BJ (cell line): ENCODE measurements at regions of chr1 and their contacts with region 1.

Region 1: GRCh38 chr1:199684686-199685273 is 342.7 kb upstream of the NR5A2 start:
- DNase-seq: peak; percentile 15
- H3K4me3 ChIP-seq: no peak overlapping the region
- H3K27me3 ChIP-seq: 0 out of 2 replicates have a peak, but pooled peaks cover 1% of the 10 kb centered on the region
- CTCF ChIP-seq: peak; percentile 78

Region 2: DNA sequence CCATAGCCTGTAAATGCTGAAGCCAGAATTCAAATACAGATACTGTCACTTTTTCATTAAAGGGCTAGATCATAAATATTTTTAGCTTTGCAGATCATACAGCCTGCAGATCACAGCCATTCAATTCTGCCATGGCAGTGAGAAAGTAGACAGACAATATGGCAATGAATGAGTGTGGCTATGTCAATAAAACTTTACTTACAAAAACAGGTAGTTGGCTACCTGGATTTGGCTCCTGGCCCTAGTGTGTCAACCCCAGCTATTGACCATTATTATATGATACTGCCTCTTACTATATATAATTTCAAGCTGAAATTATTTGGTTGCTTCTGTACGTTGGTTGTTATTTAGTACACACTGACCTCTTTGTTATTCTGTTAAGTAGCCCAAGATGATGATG is 76.1 kb after region 1 on chr1:
- CTCF ChIA-PET with region 1: no interaction called
- POLR2A ChIA-PET with region 1: no interaction called
- DNase-seq: no peak
- H3K4me3 ChIP-seq: no peak overlapping the region
- H3K27me3 ChIP-seq: peaks cover 4% of the 10 kb centered on the region
- CTCF ChIP-seq: no peak

Region 3: GRCh38 chr1:199821026-199821779 is 136.4 kb after region 1 on chr1:
- CTCF ChIA-PET with region 1: no interaction called
- POLR2A ChIA-PET with region 1: no interaction called
- DNase-seq: no peak
- H3K4me3 ChIP-seq: no peak overlapping the region
- H3K27me3 ChIP-seq: no peaks in the 10 kb centered on the region
- CTCF ChIP-seq: no peak

Region 4: GRCh38 chr1:199878823-199879222 is 194.0 kb after region 1 on chr1:
- CTCF ChIA-PET with region 1: no interaction called
- POLR2A ChIA-PET with region 1: no interaction called
- DNase-seq: no peak
- H3K4me3 ChIP-seq: no peak overlapping the region
- H3K27me3 ChIP-seq: no peaks in the 10 kb centered on the region
- CTCF ChIP-seq: no peak

Region 5: DNA sequence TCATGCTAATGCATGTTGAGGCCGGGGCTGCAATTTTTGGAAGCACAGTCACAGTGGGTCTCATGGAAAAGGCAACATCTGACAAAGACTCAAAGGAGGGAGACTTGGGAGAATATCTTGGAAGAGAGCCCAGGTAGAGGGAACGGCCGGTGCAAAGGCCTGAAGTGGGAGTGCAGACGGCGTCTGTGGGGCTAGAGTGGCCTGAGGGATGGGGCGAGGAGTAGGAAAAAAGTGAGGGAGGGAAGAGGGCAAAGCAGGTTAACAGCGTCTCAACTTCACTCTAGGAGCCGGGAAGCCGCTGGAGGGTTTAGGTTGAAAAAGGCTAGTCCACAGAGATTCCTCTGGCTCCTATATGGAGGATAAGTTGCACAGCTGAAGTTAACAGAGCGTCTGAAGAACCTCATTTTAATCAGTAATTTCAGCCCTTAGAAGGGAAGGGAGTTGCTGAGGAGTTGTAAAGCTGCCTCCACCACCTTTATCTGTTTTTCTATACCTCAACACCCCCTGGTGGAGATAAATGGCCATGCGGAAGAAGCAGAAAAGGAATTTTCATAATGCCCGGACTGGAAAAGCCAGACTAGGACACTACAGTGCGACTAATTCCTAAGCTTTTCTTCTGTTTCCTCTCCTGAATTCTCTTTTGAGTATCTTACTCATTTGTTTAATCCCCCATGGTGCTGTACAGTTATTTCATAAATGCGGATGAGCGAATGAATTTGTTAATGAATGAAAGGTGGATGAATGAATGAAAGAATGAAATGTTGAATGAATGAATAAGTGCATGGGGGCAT is 803.8 kb after region 1 on chr1:
- CTCF ChIA-PET with region 1: interaction called, 10 read pairs
- POLR2A ChIA-PET with region 1: no interaction called
- DNase-seq: no peak
- H3K4me3 ChIP-seq: no peak overlapping the region
- H3K27me3 ChIP-seq: no peaks in the 10 kb centered on the region
- CTCF ChIP-seq: peak; percentile 78